ENCODE measurements at regions of chr4 and their contacts with region 1.

Region 1: DNA sequence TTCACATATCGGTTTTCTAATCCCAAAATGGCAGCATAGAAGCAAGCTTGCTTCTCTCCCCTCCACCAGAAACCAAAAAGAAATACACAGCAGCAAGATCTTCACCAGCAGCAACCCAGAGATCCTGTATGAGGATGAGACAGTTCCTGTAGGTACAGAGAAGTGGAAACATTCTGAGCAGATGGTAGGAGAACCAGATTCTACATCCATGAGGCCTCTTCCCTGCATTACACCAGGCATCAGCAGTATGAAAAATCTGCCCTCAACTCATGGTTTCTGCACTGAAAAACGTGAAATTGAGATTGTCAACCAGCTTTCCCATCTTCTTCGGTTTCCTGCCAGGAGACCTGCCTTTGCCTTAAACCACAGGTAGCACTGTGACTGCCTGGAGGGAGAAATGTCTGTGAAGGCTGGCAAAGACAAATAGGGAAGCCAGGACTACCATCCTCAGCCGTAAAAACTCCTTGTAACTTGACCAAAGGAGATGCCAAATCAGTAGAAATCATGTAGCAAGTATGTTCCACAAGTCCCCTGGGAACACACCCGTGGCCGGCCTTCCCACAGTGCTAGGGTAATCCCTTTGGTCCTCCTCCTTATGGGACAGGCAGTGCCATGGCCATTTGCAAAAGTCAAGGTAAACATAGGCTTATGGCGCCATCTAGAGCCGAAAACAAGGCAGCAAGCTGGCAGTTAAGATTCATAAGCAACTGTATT is 24.0 kb upstream of the MTHFD2L start:
- DNase-seq: peak; percentile 76 to 86
- ATAC-seq: peak; percentile 87
- H3K4me3 ChIP-seq: no peak overlapping the region
- H3K27ac ChIP-seq: no peak overlapping the region
- H3K4me1 ChIP-seq: no peaks in the 10 kb centered on the region
- H3K27me3 ChIP-seq: no peaks in the 10 kb centered on the region

Region 2: GRCh38 chr4:73662709-73663546 is 471.0 kb before region 1 on chr4:
- intact Hi-C with region 1: loop called (anchors 1 to 5 kb)
- DNase-seq: no peak
- ATAC-seq: no peak
- H3K4me3 ChIP-seq: no peak overlapping the region
- H3K27ac ChIP-seq: no peak overlapping the region
- H3K4me1 ChIP-seq: no peaks in the 10 kb centered on the region
- H3K27me3 ChIP-seq: no peaks in the 10 kb centered on the region

Region 3: GRCh38 chr4:73729534-73730165 is 404.3 kb before region 1 on chr4:
- intact Hi-C with region 1: loop called (anchors 2 to 5 kb)
- DNase-seq: peak in 1 of 2 donors; percentile 77
- ATAC-seq: peak; percentile 89
- H3K4me3 ChIP-seq: no peak overlapping the region
- H3K27ac ChIP-seq: no peak overlapping the region
- H3K4me1 ChIP-seq: peaks cover 0 to 4% of the 10 kb centered on the region in 2 donors
- H3K27me3 ChIP-seq: no peaks in the 10 kb centered on the region

Region 4: DNA sequence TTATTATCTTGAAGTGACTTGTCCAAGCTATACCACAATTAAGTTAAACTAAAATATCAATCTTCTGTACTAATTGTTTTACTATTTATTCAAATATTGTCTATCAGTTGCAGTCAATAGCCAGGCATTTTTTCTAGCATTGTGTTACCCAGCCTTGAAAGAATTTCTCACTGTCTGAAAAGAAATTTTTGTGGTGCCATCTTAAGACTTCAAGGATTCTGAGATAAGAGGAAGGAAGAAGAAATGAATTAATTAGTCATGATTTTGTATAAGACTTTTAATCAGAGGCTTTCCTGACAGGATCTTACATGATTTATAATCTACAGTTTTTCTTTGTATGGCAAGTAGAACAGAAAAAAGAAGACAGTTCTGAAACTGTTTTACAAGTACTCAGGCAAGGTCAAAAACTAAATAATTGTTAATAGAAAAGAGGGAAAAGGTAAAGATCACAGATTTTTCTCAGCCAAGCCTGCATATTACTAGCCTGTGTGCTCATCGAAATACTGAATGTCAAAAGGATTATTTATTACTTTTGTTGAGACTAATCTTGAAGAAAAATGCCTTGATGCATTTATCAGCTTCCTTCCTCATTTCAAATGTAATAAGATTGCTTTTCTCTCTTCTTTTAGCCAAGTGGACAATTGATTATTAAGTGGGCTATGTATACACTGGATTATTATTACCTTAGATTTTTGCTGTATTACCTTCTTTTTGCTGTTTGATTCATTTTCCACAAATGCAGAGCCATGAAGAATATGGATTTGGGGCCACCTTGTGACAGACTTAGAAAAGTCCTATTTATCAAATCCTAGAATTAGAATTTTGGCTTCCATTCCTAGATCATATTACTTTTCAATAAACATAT is 210.9 kb before region 1 on chr4:
- intact Hi-C with region 1: loop called in 1 of 2 experiments (anchors 10 kb)
- DNase-seq: no peak
- ATAC-seq: no peak
- H3K4me3 ChIP-seq: no peak overlapping the region
- H3K27ac ChIP-seq: no peak overlapping the region
- H3K4me1 ChIP-seq: no peaks in the 10 kb centered on the region
- H3K27me3 ChIP-seq: no peaks in the 10 kb centered on the region

Region 5: DNA sequence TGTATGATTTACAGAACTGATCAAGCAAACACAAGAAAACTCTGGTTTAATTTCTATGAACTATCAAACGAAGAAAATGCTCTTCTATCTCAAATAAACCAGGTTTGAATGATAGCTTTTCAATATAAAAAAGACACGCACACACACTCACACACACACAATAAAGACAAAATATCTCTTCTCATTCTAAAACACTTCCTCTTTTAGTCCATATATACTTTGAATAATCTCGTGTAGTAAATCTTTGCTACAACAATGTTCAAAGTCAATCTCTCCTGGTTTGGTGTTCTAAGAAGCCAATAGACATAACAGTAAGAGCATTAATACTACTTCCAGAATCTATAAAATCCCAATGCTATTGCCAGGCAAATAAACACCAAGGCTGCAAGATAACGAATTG is 48.3 kb before region 1 on chr4:
- intact Hi-C with region 1: no loop called
- DNase-seq: no peak
- ATAC-seq: no peak
- H3K4me3 ChIP-seq: no peak overlapping the region
- H3K27ac ChIP-seq: no peak overlapping the region
- H3K4me1 ChIP-seq: no peaks in the 10 kb centered on the region
- H3K27me3 ChIP-seq: no peaks in the 10 kb centered on the region

Region 6: DNA sequence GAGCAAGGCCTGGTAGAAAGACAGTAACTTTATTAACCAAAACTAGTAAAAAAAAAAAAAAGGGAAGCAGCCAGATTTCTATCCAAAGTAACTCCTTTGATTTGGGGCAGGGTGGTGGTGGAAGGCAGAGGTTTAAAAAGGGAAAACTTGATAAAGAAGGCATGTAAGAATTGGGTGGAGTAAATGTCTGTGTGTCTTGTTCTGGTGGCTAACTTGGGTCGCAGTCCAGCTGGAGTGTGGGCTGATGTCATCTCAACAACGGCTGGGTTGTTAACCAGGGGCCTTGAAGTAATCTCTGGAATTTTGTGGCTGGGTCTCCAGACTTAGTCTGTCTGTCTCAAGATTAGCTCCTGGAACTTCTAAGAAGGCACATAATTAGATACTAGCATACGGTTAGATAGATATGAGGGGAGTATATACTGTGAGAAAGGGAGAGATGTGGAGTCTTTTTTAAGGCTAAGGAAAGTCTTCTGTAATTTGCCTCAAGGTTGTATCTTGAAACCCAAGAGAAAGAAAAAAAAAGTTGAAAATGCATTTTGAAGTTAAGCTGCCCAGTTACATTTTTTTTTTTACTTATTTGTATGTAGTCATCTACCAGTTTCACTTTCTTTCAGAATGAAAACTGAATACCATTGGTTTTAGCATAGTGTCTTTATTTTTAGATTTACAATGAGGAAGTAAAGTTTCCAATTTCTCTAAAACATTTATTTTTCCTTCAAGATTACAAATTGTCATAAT is 72.3 kb after region 1 on chr4:
- intact Hi-C with region 1: no loop called
- DNase-seq: peak in 1 of 2 donors; percentile 55
- ATAC-seq: peak; percentile 62
- H3K4me3 ChIP-seq: no peak overlapping the region
- H3K27ac ChIP-seq: peak overlapping the region in 1 of 2 donors; percentile 54
- H3K4me1 ChIP-seq: peaks cover 3 to 6% of the 10 kb centered on the region in 2 donors
- H3K27me3 ChIP-seq: no peaks in the 10 kb centered on the region